G401 (cell line): ENCODE measurements at regions of chr1 and their contacts with region 1.

Region 1: DNA sequence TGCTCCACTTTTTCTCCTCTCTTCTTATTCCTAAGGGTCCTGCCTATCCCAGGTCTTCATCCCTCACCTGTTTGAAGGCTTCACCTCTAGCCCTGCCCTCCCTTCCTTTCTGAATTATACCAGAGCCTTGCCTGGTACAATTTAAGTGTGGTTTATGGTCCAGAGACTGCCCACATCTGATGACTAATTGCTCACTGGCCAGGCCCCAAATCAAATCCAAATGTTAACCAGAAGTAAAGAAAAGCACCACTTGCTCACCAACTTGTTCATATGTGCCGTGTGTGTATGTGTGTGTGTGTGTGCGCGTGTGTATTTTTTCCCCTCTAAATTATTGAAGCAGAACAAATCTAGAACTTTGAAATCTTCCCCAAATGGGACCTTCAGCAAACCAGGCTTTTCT is 26.4 kb downstream of the MYOM3 start:
- DNase-seq: no peak

Region 2: GRCh38 chr1:23959461-23960290 is 125.9 kb before region 1 on chr1 and contains the start of gene PNRC2:
- in situ Hi-C with region 1: loop called (anchors 10 kb)
- DNase-seq: peak; percentile 97
- total RNA-seq, gene PNRC2: 115 and 174 TPM in 2 replicates